ENCODE measurements at regions of chr14 and their contacts with region 1.

Region 1: GRCh38 chr14:68335312-68335711 is 457.6 kb downstream of the ZFP36L1 start:
- DNase-seq: no peak
- ATAC-seq: no peak
- H3K4me3 Mint-ChIP-seq: no peak overlapping the region
- H3K27ac Mint-ChIP-seq: peak overlapping the region in 1 of 10 donors; percentile 2
- H3K4me1 Mint-ChIP-seq: peaks cover 0 to 50% (median 8%) of the 10 kb centered on the region in 4 donors
- H3K27me3 Mint-ChIP-seq: no peaks in the 10 kb centered on the region

Region 2: GRCh38 chr14:68318828-68319227 is 16.5 kb before region 1 on chr14:
- POLR2A ChIA-PET with region 1: no interaction called
- DNase-seq: no peak
- ATAC-seq: no peak
- H3K4me3 Mint-ChIP-seq: no peak overlapping the region
- H3K27ac Mint-ChIP-seq: no peak overlapping the region
- H3K4me1 Mint-ChIP-seq: peaks cover 10 to 41% (median 15%) of the 10 kb centered on the region in 4 donors
- H3K27me3 Mint-ChIP-seq: no peaks in the 10 kb centered on the region

Region 3: GRCh38 chr14:68421116-68421515 is 85.8 kb after region 1 on chr14:
- POLR2A ChIA-PET with region 1: interaction called, 11 read pairs
- DNase-seq: peak in 1 of 10 donors; percentile 52
- ATAC-seq: no peak
- H3K4me3 Mint-ChIP-seq: no peak overlapping the region
- H3K27ac Mint-ChIP-seq: peak overlapping the region in 5 of 10 donors; percentile 46 to 75 (median 58)
- H3K4me1 Mint-ChIP-seq: peaks cover 16 to 52% (median 36%) of the 10 kb centered on the region in 4 donors
- H3K27me3 Mint-ChIP-seq: no peaks in the 10 kb centered on the region

Region 4: DNA sequence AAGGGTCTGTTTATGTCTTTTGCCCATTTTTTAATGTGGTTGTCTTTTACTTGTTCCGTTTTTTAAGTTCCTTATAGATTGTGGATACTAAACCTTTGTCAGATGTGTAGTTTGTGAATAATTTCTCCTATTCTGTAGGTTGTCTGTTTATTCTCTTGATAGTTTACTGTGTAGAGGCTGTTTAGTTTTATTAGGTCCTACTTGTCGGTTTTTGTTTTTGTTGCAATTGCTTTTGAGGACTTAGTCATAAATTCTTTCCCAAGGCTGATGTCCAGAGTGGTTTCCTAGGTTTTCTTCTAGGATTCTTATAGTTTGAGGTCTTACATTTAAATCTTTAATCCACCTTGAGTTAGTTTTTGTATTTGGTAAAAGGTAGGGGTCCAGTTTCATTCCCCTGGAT is 1097.1 kb after region 1 on chr14:
- POLR2A ChIA-PET with region 1: no interaction called
- DNase-seq: no peak
- ATAC-seq: no peak
- H3K4me3 Mint-ChIP-seq: no peak overlapping the region
- H3K27ac Mint-ChIP-seq: no peak overlapping the region
- H3K4me1 Mint-ChIP-seq: peaks cover 7 to 25% (median 23%) of the 10 kb centered on the region in 4 donors
- H3K27me3 Mint-ChIP-seq: no peaks in the 10 kb centered on the region

Measured in naive thymus-derived CD8-positive, alpha-beta T cell (primary cell).